Breast epithelium (tissue), 4 donors: ENCODE measurements at regions of chr22 and their contacts with region 1.

Region 1: GRCh38 chr22:37544955-37545699 is 15.2 kb upstream of the CDC42EP1 start:
- DNase-seq: peak in 1 of 2 donors; percentile 82
- H3K4me3 ChIP-seq: peak overlapping the region; percentile 13 to 57 (median 35)
- H3K27ac ChIP-seq: peak overlapping the region; percentile 96 to 98
- H3K4me1 ChIP-seq: peaks cover 18 to 46% of the 10 kb centered on the region in 2 donors
- H3K27me3 ChIP-seq: no peaks in the 10 kb centered on the region
- CTCF ChIP-seq: peak; percentile 13 to 61 (median 38)
- POLR2A ChIP-seq: no peak

Region 2: GRCh38 chr22:36244522-36245391 is 1300.4 kb before region 1 on chr22:
- intact Hi-C with region 1: loop called (anchors 5 kb)
- DNase-seq: peak in 1 of 2 donors; percentile 30
- H3K4me3 ChIP-seq: no peak overlapping the region
- H3K27ac ChIP-seq: peak overlapping the region; percentile 69 to 91
- H3K4me1 ChIP-seq: peaks cover 6 to 8% of the 10 kb centered on the region in 2 donors
- H3K27me3 ChIP-seq: no peaks in the 10 kb centered on the region
- CTCF ChIP-seq: no peak
- POLR2A ChIP-seq: no peak

Region 3: DNA sequence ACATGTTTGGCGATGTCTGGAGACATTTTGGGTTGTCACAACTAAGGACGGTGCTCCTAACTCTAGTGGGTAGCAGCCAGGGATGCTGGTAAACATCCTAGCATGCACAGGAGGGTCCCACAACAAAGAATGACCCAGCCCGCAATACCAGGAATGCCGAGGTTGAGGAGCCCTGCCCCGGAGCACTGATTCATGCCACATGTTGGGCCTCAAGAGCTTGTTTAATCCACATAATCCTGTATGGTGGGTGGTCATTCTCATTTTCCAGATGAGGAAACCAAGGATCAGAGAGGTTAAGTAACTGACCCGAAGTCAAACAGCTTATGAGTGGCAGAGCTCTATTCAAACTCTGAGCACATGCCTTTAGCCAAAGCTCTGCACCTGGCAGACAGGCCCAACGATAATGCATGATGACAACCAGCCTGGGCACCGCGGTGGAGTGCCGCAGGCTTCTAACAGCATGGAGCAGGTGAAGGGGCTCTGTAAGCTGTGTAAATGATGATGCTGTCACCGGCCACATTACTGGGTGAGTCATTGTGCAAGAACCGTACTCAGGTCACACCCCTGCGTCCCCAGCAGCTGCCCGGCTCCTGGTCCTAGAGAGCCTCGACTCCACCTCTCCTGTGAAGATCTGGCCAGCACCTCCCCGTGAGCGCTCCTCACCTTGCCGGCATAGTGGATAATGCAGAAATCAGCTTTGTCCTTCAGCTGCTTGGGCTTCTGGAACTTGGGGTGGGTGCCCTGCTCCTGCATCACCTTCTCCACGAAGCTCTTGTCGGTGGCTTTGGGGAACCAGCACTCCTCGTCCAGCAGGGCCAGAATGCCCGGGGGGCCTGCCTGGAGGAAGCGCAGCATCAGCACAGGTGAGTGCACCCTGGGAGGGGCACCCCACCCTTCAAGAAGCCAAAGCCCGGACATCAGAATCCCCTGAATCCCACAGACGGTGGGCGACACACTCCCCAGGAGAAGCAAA is 1233.5 kb before region 1 on chr22:
- intact Hi-C with region 1: no loop called
- DNase-seq: no peak
- H3K4me3 ChIP-seq: no peak overlapping the region
- H3K27ac ChIP-seq: no peak overlapping the region
- H3K4me1 ChIP-seq: no peaks in the 10 kb centered on the region
- H3K27me3 ChIP-seq: no peaks in the 10 kb centered on the region
- CTCF ChIP-seq: no peak
- POLR2A ChIP-seq: no peak

Region 4: GRCh38 chr22:37599153-37599552 is 54.0 kb after region 1 on chr22:
- intact Hi-C with region 1: loop called (anchors 10 kb)
- DNase-seq: peak in 1 of 2 donors; percentile 70
- H3K4me3 ChIP-seq: no peak overlapping the region
- H3K27ac ChIP-seq: peak overlapping the region in 1 of 2 donors; percentile 60
- H3K4me1 ChIP-seq: no peaks in the 10 kb centered on the region
- H3K27me3 ChIP-seq: no peaks in the 10 kb centered on the region
- CTCF ChIP-seq: no peak
- POLR2A ChIP-seq: no peak